Spleen (tissue), 13 donors: ENCODE measurements at regions of chr3 and their contacts with region 1.

Region 1: DNA sequence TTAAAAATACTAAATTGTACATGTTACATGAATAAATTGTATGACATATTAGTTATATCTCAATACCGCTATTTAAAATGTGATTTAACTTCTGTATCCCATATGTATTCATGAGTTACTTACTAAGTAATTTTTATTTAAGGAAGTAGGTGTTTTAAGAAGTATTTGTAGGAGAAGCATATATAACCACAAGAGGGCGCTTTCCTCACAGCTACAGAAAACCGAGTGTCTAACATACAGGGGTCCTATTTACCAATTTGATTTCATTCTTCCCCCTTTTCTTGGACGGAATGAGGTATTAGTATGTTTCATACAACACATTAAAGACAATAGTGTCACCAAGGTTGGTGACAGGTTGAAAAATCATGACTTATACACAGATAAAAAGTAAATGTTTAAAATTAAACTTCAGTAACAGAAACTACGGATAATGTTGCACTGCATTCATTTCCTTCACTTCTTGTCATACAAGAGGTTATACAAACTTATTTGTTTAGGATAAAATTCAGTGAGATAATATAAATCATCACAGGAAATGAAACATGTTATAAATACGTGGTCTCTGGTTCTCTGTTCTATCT is 253.6 kb downstream of the MAGI1 start:
- DNase-seq: no peak
- H3K4me3 ChIP-seq: no peak overlapping the region
- H3K27ac ChIP-seq: peak overlapping the region in 3 of 8 donors; percentile 54 to 77 (median 71)
- H3K4me1 ChIP-seq: peaks cover 0 to 21% (median 8%) of the 10 kb centered on the region in 6 donors
- H3K27me3 ChIP-seq: no peaks in the 10 kb centered on the region
- CTCF ChIP-seq: peak in 9 of 11 experiments; percentile 8 to 62 (median 48)
- POLR2A ChIP-seq: no peak

Region 2: DNA sequence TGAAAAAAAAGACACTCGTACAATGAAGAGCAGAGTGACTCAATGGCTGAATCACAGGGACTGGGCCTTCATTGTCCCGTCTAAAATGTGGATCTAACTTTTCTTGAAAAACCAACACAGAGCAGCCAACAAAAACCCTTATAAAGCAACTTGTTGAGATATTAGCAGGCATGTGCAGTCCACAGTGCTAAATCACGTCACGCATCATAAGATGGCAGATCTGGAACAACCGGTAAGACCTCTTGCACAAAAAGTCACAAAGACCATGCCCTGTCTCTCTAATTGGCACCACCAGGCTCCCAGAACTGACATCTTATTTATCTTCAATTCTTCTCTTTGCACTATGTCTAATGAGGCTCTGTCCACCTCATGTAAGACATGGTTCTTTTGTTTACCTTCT is 76.6 kb after region 1 on chr3:
- intact Hi-C with region 1: no loop called
- DNase-seq: no peak
- H3K4me3 ChIP-seq: no peak overlapping the region
- H3K27ac ChIP-seq: no peak overlapping the region
- H3K4me1 ChIP-seq: peaks cover 0 to 17% (median 6%) of the 10 kb centered on the region in 6 donors
- H3K27me3 ChIP-seq: no peaks in the 10 kb centered on the region
- CTCF ChIP-seq: no peak
- POLR2A ChIP-seq: no peak

Region 3: DNA sequence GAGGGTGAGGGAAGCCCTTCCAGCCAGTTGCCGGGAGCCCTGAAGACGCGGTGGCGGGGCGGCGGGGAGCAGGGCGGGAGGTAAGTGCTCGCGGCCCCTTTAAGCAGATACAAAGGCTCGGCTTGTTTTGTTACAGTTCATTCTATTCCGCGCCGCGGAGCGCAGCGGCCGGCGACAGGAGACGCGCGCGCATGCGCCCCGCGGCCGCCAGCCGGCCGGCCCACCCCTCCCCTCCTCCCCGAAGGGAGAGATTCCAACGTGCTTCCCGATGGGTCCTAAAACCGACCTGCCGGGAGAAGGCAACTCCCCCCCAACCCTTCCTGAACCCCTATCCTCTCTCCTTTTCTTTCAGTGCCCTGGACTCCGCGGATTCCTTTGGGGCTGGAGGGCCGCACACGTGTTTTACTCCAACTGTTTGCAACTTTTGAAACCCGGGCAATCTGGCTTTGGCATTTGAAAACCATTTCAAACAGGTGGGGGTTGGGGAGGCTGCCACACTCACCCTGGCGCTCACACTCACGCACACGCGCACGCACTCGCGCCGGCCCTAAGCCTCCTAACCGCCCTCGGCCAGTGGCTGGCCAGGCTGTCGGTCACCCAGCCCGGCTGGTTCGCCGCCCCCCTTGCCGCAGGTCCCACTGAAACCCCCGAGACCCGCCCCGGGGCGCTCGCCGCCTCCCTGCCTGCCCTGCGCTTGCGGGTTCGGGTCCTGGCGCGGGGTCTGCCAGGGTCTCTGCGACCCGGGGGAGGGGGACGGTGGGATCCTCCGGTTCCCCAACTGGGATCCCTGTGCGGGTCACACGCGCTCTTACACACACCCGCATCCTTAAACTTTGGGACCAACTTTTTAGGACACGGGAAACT is 253.8 kb after region 1 on chr3 and contains the start of gene MAGI1:
- intact Hi-C with region 1: loop called (anchors 10 kb)
- DNase-seq: peak; percentile 83
- H3K4me3 ChIP-seq: peak within 1 kb of the TSS; percentile 27 to 74 (median 55)
- H3K27ac ChIP-seq: peak within 1 kb of the TSS; percentile 17 to 96 (median 90)
- H3K4me1 ChIP-seq: peaks cover 0 to 49% (median 12%) of the 10 kb centered on the region in 6 donors
- H3K27me3 ChIP-seq: peaks cover 0 to 61% (median 18%) of the 10 kb centered on the region in 7 donors
- CTCF ChIP-seq: no peak
- POLR2A ChIP-seq: peak in 1 of 3 donors; percentile 77
- total RNA-seq, gene MAGI1: 43.1 to 104 (median 88.9) TPM

Region 4: GRCh38 chr3:66138336-66139313 is 353.5 kb after region 1 on chr3:
- intact Hi-C with region 1: loop called (anchors 10 kb)
- DNase-seq: no peak
- H3K4me3 ChIP-seq: no peak overlapping the region
- H3K27ac ChIP-seq: no peak overlapping the region
- H3K4me1 ChIP-seq: peaks cover 0 to 1% (median 0%) of the 10 kb centered on the region in 6 donors
- H3K27me3 ChIP-seq: no peaks in the 10 kb centered on the region
- CTCF ChIP-seq: peak in 10 of 11 experiments; percentile 26 to 72 (median 55)
- POLR2A ChIP-seq: no peak